Ascending aorta (tissue), 2 donors: ENCODE measurements at regions of chr17 and their contacts with region 1.

Region 1: GRCh38 chr17:45135192-45135977 is at the start of gene ACBD4:
- DNase-seq: peak; percentile 81 to 98
- H3K4me3 ChIP-seq: peak within 1 kb of the TSS; percentile 62 to 81
- H3K27ac ChIP-seq: peak within 1 kb of the TSS; percentile 86 to 90
- H3K4me1 ChIP-seq: peaks cover 5 to 19% of the 10 kb centered on the region in 2 donors
- H3K27me3 ChIP-seq: no peaks in the 10 kb centered on the region
- CTCF ChIP-seq: peak; percentile 99 to 100 (median 99)
- total RNA-seq, gene ACBD4: 14.7 TPM

Region 2: DNA sequence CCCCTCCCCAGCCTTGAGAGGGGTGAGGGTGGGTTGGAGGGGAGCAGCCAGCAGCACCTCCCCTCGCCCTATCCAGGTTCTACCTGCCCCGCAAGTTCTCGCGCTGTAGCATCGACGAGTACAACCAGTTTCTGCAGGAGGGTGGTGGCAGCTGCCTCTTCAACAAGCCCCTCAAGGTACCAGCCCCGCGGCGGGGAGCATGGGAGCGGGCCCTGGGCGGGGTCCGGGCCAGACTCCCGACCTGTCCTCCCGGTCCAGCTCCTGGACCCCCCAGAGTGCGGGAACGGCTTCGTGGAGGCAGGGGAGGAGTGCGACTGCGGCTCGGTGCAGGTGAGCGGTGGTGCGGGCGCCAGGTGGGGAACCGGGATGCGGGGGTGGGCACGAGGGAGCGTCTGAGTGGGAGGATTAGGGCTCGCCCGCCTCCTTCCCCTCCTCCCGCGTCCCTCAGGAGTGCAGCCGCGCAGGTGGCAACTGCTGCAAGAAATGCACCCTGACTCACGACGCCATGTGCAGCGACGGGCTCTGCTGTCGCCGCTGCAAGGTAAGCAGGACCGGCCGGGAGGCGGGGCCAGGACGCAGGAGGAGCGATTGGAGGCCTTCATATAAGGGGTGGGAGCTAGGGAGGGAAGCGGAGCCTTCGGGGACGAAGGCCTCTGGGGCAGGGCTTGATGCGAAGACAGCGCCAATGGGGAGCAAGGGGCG is 360.1 kb before region 1 on chr17:
- intact Hi-C with region 1: loop called (anchors 1 kb)
- DNase-seq: peak; percentile 91 to 98
- H3K4me3 ChIP-seq: peak overlapping the region; percentile 54 to 73
- H3K27ac ChIP-seq: peak overlapping the region in 1 of 2 donors; percentile 1
- H3K4me1 ChIP-seq: peaks cover 10 to 14% of the 10 kb centered on the region in 2 donors
- H3K27me3 ChIP-seq: no peaks in the 10 kb centered on the region
- CTCF ChIP-seq: no peak

Region 3: GRCh38 chr17:45021607-45022287 is 113.6 kb before region 1 on chr17:
- intact Hi-C with region 1: loop called (anchors 2 kb)
- DNase-seq: peak in 1 of 2 donors; percentile 76
- H3K4me3 ChIP-seq: peak overlapping the region; percentile 46 to 68
- H3K27ac ChIP-seq: peak overlapping the region; percentile 7 to 83
- H3K4me1 ChIP-seq: peaks cover 5 to 21% of the 10 kb centered on the region in 2 donors
- H3K27me3 ChIP-seq: no peaks in the 10 kb centered on the region
- CTCF ChIP-seq: peak; percentile 64 to 97 (median 70)

Region 4: GRCh38 chr17:45060797-45061605 is 74.4 kb before region 1 on chr17 and contains the start of gene NMT1:
- intact Hi-C with region 1: loop called (anchors 2 kb)
- DNase-seq: peak; percentile 97 to 100
- H3K4me3 ChIP-seq: peak within 1 kb of the TSS; percentile 82 to 84
- H3K27ac ChIP-seq: peak within 1 kb of the TSS; percentile 90 to 94
- H3K4me1 ChIP-seq: peaks cover 11 to 41% of the 10 kb centered on the region in 2 donors
- H3K27me3 ChIP-seq: no peaks in the 10 kb centered on the region
- CTCF ChIP-seq: no peak
- total RNA-seq, gene NMT1: 89.7 TPM

Region 5: GRCh38 chr17:45148183-45149036 is 13.0 kb after region 1 on chr17 and contains the start of gene HEXIM1:
- intact Hi-C with region 1: loop called (anchors 1 kb)
- DNase-seq: peak; percentile 98 to 100
- H3K4me3 ChIP-seq: peak within 1 kb of the TSS; percentile 73 to 90
- H3K27ac ChIP-seq: peak within 1 kb of the TSS; percentile 96 to 97
- H3K4me1 ChIP-seq: peaks cover 11 to 47% of the 10 kb centered on the region in 2 donors
- H3K27me3 ChIP-seq: no peaks in the 10 kb centered on the region
- CTCF ChIP-seq: no peak
- total RNA-seq, gene HEXIM1: 23.7 TPM

Region 6: DNA sequence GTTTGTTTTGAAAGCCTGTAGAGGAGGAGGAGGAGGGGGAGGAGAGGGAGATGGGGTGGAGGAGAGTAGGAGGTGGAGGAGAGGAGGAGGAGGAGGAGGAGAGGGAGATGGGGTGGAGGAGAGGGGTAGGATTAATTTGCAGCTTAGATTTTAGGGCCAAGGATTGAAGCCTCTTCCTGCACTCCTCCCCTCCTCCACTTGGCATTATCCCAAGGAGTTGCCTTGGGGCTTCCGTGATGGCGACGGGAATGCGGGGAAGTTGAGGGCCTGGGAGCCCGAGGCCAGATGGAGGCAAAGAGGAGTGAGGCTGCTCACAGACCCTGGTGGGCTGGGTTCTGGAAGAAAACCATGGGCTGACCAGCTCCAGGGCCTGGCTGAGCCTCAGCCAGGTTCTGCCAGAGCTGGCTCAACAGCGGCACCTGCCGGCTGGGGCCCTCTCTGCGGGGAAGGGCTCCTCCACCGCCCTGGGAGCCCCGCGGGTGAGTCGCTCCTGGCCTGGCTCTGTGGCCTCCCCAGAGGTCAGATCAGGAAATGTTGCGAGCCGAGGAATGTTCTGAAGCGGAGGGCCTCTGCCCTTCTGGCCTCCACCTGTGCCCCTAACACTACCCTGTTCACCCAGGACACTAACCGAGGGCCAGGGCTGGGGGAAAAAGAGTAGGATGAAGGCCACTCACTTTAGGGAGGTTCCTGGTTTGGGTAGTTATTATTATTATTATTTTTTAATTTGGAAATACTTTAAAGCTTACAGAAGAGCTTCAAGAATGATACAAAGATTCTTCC is 62.4 kb after region 1 on chr17:
- intact Hi-C with region 1: loop called (anchors 1 kb)
- DNase-seq: peak; percentile 55 to 96
- H3K4me3 ChIP-seq: peak overlapping the region in 1 of 2 donors; percentile 38
- H3K27ac ChIP-seq: peak overlapping the region in 1 of 2 donors; percentile 26
- H3K4me1 ChIP-seq: peaks cover 0 to 4% of the 10 kb centered on the region in 2 donors
- H3K27me3 ChIP-seq: no peaks in the 10 kb centered on the region
- CTCF ChIP-seq: peak; percentile 99 to 100 (median 99)